ENCODE measurements at regions of chr1 and their contacts with region 1.

Region 1: DNA sequence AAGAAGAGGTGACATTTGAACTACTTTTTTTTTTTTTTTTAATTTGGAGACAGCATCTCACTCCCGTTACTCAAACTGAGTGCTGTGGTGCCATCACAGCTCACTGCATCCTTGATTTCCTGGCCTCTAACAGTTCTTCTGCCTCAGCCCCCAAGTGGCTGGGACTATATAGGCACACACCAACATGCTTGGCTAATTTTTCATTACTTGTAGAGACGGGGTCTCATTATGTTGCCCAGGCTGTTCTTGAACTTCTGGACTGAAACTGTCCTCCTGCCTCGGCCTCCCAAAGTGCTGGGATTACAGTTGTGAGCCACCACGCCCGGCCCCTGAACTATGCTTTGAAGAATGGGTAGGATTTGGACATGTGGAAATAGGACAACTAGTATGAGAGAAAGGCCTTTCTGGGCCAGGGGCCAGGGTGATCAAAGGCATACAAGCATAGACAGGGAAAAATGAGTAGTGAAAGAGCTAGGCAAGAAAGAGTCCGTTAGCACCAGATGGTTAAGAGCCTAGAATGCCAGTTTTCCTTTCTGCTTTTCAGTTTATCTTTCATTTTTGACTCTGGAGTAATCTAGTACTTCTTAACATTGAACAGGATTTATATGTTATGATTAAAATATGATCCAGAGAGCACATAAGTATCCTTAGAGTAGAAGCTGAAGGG is 6.3 kb downstream of the RABGAP1L start:
- DNase-seq: no peak
- H3K4me3 ChIP-seq: no peak overlapping the region
- H3K27ac ChIP-seq: peak overlapping the region; percentile 13 to 46 (median 30)
- H3K4me1 ChIP-seq: peaks cover 9 to 54% (median 35%) of the 10 kb centered on the region in 4 donors
- H3K27me3 ChIP-seq: no peaks in the 10 kb centered on the region
- CTCF ChIP-seq: no peak
- EP300 ChIP-seq: no peak
- POLR2A ChIP-seq: no peak

Region 2: GRCh38 chr1:174114788-174115448 is 50.7 kb before region 1 on chr1:
- intact Hi-C with region 1: loop called (anchors 5 kb)
- DNase-seq: no peak
- H3K4me3 ChIP-seq: no peak overlapping the region
- H3K27ac ChIP-seq: peak overlapping the region in 1 of 4 donors; percentile 64
- H3K4me1 ChIP-seq: peaks cover 0 to 39% (median 31%) of the 10 kb centered on the region in 4 donors
- H3K27me3 ChIP-seq: no peaks in the 10 kb centered on the region
- CTCF ChIP-seq: peak; percentile 43 to 64 (median 54)
- EP300 ChIP-seq: no peak
- POLR2A ChIP-seq: no peak

Region 3: GRCh38 chr1:174134003-174134659 is 31.5 kb before region 1 on chr1:
- intact Hi-C with region 1: no loop called
- DNase-seq: no peak
- H3K4me3 ChIP-seq: no peak overlapping the region
- H3K27ac ChIP-seq: no peak overlapping the region
- H3K4me1 ChIP-seq: no peaks in the 10 kb centered on the region
- H3K27me3 ChIP-seq: no peaks in the 10 kb centered on the region
- CTCF ChIP-seq: no peak
- EP300 ChIP-seq: no peak
- POLR2A ChIP-seq: no peak

Region 4: GRCh38 chr1:174204697-174205308 is 39.2 kb after region 1 on chr1:
- intact Hi-C with region 1: no loop called
- DNase-seq: no peak
- H3K4me3 ChIP-seq: no peak overlapping the region
- H3K27ac ChIP-seq: no peak overlapping the region
- H3K4me1 ChIP-seq: peaks cover 0 to 21% (median 2%) of the 10 kb centered on the region in 4 donors
- H3K27me3 ChIP-seq: no peaks in the 10 kb centered on the region
- CTCF ChIP-seq: no peak
- EP300 ChIP-seq: no peak
- POLR2A ChIP-seq: no peak